AG04450 (cell line): ENCODE measurements at regions of chr17 and their contacts with region 1.

Region 1: DNA sequence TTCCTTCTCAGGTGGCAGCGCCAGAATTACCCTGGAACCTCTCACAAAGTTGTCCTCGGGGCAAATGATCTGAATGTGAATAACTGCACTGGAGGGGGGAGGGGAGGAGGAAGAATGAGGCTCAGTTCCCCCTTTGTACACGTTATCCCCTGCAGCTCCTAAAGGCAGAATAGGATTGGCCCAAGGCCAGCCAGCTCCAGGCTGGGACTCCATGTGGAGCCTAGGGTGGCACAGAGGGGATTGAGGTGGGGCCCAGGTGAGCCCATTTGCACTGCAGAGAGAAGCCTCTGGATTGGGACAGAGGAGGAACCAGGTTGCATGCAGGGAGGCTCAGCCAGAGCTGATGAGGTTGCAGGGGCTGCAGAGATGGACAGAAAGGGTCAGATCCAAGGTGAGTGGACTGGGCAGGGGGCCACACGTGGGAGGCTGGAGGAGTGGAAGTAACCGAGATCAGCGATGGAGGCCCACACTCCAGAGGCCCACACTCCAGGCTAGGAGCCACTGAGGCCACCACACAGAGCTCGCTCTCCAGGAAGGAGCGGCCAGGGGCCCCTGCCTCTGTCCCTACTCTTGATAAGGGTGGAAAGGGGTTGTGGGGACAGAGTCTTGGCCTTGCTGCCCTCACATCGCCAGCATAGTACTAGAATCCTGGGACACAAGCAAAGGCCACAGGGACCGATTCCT is 78.6 kb downstream of the RBFOX3 start:
- DNase-seq: no peak
- H3K4me3 ChIP-seq: no peak overlapping the region
- H3K27ac ChIP-seq: no peak overlapping the region
- H3K27me3 ChIP-seq: peaks cover 2% of the 10 kb centered on the region
- CTCF ChIP-seq: no peak

Region 2: GRCh38 chr17:79543531-79543930 is 11.3 kb after region 1 on chr17:
- CTCF ChIA-PET with region 1: no interaction called
- POLR2A ChIA-PET with region 1: no interaction called
- DNase-seq: no peak
- H3K4me3 ChIP-seq: no peak overlapping the region
- H3K27ac ChIP-seq: no peak overlapping the region
- H3K27me3 ChIP-seq: no peaks in the 10 kb centered on the region
- CTCF ChIP-seq: no peak

Region 3: GRCh38 chr17:79612468-79613194 is 80.4 kb after region 1 on chr17:
- CTCF ChIA-PET with region 1: no interaction called
- POLR2A ChIA-PET with region 1: interaction called, 11 read pairs
- DNase-seq: no peak
- H3K4me3 ChIP-seq: no peak overlapping the region
- H3K27ac ChIP-seq: no peak overlapping the region
- H3K27me3 ChIP-seq: peaks cover 48% of the 10 kb centered on the region
- CTCF ChIP-seq: peak; percentile 29

Region 4: DNA sequence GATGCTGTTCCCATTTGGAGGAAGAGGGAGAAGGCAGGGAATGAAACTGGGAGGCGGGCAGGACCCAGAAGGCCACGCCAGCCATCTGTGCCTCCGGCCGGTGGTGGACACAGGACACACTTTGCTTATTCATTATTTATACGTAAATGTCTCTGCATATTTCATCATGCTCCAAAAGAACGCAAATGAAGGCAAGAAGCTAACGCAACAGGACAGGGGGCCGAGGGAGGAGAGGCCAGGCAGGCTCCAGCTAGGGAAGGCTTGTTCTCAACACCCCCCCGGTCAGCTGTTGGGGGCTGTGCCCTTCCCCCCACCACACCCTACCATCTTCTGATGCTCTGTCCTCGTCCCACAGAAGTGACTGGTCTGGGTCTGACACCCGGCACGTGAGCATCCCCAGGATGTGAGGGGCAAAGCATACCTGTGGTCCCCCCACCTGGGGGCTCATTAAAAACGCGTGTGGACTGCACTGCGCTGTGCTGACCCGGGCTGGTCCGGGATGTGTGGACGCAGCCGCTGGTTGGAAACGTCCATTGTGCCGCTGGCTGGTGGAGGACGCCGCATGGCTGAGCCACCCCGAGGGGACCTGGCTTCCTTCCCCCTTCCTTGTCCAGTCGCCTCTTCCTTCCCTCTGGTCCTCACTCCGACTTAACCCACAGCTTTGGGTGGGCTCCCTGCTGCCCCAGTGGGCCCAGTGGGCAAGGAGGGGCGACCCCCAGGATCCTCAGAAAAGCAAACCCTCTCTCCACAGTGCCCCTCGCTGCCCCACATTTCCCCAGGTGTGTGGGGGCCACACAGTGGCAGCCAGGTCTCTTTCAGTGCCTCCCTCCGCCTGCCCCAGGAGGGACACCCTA is 152.1 kb after region 1 on chr17:
- CTCF ChIA-PET with region 1: no interaction called
- POLR2A ChIA-PET with region 1: no interaction called
- DNase-seq: no peak
- H3K4me3 ChIP-seq: no peak overlapping the region
- H3K27ac ChIP-seq: no peak overlapping the region
- H3K27me3 ChIP-seq: peaks cover 4% of the 10 kb centered on the region
- CTCF ChIP-seq: no peak